ENCODE measurements at regions of chr12 and their contacts with region 1.

Region 1: GRCh38 chr12:52759695-52760094 is 17.4 kb downstream of the KRT76 start:
- DNase-seq: no peak
- H3K4me3 ChIP-seq: no peak overlapping the region
- H3K27ac ChIP-seq: no peak overlapping the region
- H3K4me1 ChIP-seq: no peaks in the 10 kb centered on the region
- H3K27me3 ChIP-seq: peaks cover 3% of the 10 kb centered on the region
- CTCF ChIP-seq: no peak

Region 2: GRCh38 chr12:52351196-52352059 is 408.3 kb before region 1 on chr12:
- CTCF ChIA-PET with region 1: no interaction called
- dilution Hi-C with region 1: no loop called
- in situ Hi-C with region 1: no loop called
- intact Hi-C with region 1: loop called (anchors 5 kb)
- DNase-seq: no peak
- H3K4me3 ChIP-seq: no peak overlapping the region
- H3K27ac ChIP-seq: no peak overlapping the region
- H3K4me1 ChIP-seq: peaks cover 20% of the 10 kb centered on the region
- H3K27me3 ChIP-seq: no peaks in the 10 kb centered on the region
- CTCF ChIP-seq: no peak

Region 3: GRCh38 chr12:52708010-52708409 is 51.7 kb before region 1 on chr12:
- CTCF ChIA-PET with region 1: no interaction called
- dilution Hi-C with region 1: loop called (anchors 5 kb)
- in situ Hi-C with region 1: no loop called
- intact Hi-C with region 1: no loop called
- DNase-seq: no peak
- H3K4me3 ChIP-seq: no peak overlapping the region
- H3K27ac ChIP-seq: no peak overlapping the region
- H3K4me1 ChIP-seq: no peaks in the 10 kb centered on the region
- H3K27me3 ChIP-seq: peaks cover 2% of the 10 kb centered on the region
- CTCF ChIP-seq: no peak